Ovary (tissue), 10 donors: ENCODE measurements at regions of chr17 and their contacts with region 1.

Region 1: GRCh38 chr17:76687308-76688164 is 23.2 kb downstream of the MXRA7 start:
- DNase-seq: peak in 4 of 5 donors; percentile 42 to 72 (median 64)
- H3K4me3 ChIP-seq: no peak overlapping the region
- H3K27ac ChIP-seq: peak overlapping the region; percentile 46 to 71
- H3K4me1 ChIP-seq: peaks cover 28% of the 10 kb centered on the region
- H3K27me3 ChIP-seq: no peaks in the 10 kb centered on the region
- CTCF ChIP-seq: no peak
- EP300 ChIP-seq: no peak
- POLR2A ChIP-seq: no peak

Region 2: DNA sequence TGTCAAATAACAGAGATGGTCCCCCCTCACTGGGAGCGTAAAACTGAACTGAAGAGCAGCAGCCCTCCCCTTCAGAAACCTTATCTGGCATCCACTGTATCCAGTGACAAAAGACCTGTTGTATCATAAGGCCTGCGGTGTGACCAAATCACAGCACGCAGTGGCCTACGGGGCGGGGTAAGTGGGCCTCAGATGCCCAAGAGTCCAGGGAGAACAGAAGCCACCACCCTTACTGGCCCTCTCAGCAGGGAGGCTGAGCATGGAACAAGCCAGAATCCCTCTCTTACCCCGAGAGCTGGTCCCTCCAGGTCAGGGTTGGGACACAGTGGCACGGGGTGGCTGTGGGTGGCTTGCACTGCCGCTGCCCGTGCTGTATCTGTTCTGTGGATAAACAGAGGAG is 33.4 kb after region 1 on chr17:
- intact Hi-C with region 1: loop called in 1 of 4 experiments (anchors 5 kb)
- DNase-seq: no peak
- H3K4me3 ChIP-seq: no peak overlapping the region
- H3K27ac ChIP-seq: no peak overlapping the region
- H3K4me1 ChIP-seq: peaks cover 3% of the 10 kb centered on the region
- H3K27me3 ChIP-seq: no peaks in the 10 kb centered on the region
- CTCF ChIP-seq: no peak
- EP300 ChIP-seq: no peak
- POLR2A ChIP-seq: no peak

Region 3: DNA sequence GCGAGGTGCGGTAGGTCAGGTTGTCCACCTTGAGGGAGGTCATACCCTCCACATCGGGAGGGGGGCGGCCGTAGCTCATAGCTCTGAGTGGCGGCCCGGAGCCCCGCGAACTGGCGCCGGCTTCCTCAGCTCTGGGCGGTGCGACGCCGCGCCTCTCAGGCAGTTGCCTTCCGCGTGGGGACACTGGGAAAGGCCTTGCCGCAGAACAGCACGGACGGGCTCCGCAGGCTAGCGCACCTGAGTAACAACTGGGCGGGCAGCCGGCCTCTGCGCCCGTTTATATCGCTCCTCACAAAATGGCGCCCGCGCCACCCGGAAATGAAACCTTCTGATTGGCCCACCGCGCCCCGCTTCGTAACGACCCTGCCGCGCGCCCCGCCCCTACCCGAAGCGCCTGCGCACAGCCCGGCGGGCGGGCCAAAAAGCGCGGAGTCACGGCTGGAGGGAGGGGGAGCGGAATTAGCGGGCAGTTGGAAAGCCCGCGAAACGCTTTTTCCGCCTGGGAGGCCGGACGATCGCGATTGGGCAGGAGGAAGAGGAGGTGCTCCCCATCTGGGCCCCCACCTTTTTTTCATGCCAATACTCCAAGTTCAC is 49.6 kb after region 1 on chr17 and contains the start of gene SRSF2:
- intact Hi-C with region 1: no loop called
- DNase-seq: peak; percentile 98 to 99 (median 99)
- H3K4me3 ChIP-seq: peak within 1 kb of the TSS; percentile 87
- H3K27ac ChIP-seq: peak within 1 kb of the TSS; percentile 97 to 99
- H3K4me1 ChIP-seq: no peaks in the 10 kb centered on the region
- H3K27me3 ChIP-seq: no peaks in the 10 kb centered on the region
- CTCF ChIP-seq: peak in 1 of 3 donors; percentile 17
- EP300 ChIP-seq: peak; percentile 67
- POLR2A ChIP-seq: peak; percentile 99
- total RNA-seq, gene SRSF2: 149 to 245 (median 174) TPM